ENCODE measurements at regions of chr2 and their contacts with region 1.

Region 1: DNA sequence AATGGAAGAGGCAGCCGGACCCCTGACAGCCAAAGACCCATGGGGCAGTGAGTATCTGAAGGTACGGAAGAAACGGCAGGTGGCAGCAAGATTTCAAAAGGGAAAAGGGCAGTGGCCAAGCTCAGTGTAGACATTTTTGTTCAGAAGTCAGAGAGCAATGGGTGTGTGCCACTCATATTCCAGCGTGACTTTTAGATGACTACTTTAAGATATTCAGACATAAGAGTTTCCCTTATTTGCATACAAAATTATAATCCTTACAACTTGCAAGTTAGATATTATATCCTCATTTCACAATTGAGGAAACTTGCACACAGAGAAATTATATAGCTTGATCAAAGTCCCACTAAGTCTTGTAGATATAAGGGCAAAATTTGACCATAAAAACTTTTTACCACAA is 60.7 kb upstream of the CYTIP start:
- DNase-seq: no peak
- H3K4me3 Mint-ChIP-seq: no peak overlapping the region
- H3K27ac Mint-ChIP-seq: no peak overlapping the region
- H3K4me1 Mint-ChIP-seq: peaks cover 13% of the 10 kb centered on the region
- H3K27me3 Mint-ChIP-seq: peaks cover 3% of the 10 kb centered on the region

Region 2: GRCh38 chr2:157492189-157492773 is 12.3 kb before region 1 on chr2:
- CTCF ChIA-PET with region 1: interaction called, 12 read pairs
- intact Hi-C with region 1: no loop called
- DNase-seq: peak; percentile 89
- H3K4me3 Mint-ChIP-seq: no peak overlapping the region
- H3K27ac Mint-ChIP-seq: no peak overlapping the region
- H3K4me1 Mint-ChIP-seq: peaks cover 62% of the 10 kb centered on the region
- H3K27me3 Mint-ChIP-seq: no peaks in the 10 kb centered on the region

Region 3: DNA sequence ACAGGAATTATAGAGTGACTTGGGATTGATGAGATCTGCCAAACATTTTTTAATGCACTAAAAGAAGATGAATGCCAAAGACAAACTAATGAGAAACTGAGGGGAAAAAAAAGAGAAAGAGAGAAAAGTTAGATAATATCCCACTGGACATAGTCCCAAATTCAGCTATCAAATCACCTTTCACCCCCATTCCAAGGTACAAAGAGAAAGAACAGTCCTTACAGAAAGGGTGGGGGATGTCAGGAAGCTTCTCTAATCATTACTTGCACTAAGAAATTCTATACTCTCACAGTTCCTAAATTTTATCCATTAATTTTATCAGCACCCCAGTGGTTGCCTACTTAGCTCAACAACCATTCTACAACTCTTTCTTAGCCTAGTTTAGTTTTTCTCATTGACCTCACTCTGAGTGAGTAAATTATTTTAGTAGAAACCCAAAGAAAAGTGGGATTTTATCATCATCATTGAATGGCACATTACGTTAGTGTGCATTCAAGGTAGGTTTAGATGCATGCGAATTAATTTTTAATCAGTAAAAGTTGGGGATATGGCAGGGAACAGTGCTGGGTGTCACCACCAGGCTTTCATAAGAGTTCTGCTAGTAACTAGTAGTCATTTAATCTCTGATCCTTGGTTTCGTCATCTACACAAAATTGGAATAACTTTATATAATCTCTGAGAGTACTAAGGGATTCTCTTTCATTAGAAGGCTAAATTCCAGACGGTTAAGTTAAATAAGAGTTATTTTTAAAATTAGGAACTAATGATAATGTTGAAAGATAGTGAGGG is 24.5 kb after region 1 on chr2:
- CTCF ChIA-PET with region 1: no interaction called
- intact Hi-C with region 1: no loop called
- DNase-seq: no peak
- H3K4me3 Mint-ChIP-seq: no peak overlapping the region
- H3K27ac Mint-ChIP-seq: no peak overlapping the region
- H3K4me1 Mint-ChIP-seq: no peaks in the 10 kb centered on the region
- H3K27me3 Mint-ChIP-seq: no peaks in the 10 kb centered on the region